ENCODE measurements at regions of chr6 and their contacts with region 1.

Region 1: DNA sequence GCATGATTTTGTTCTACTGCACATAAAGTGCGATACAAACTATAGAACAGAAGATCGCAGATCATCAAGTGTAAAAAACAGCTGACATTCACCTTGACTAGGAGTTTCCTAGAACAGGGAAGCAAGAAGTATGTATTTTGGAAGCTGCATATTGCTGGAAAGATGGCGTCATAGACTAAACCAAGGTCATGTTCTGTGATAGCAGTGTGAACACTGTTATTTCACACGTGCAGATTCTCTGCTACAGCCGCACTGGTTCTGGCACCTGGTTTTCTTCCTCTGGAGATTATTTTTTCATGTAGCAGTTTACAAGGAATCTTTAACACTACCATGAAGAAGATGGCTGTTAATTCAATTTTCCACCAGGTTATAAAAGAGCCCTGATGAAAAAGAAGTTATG is 681.2 kb downstream of the PRKN start:
- DNase-seq: no peak
- H3K4me3 ChIP-seq: no peak overlapping the region
- H3K27ac ChIP-seq: no peak overlapping the region
- H3K4me1 ChIP-seq: no peaks in the 10 kb centered on the region
- H3K27me3 ChIP-seq: no peaks in the 10 kb centered on the region
- CTCF ChIP-seq: no peak

Region 2: DNA sequence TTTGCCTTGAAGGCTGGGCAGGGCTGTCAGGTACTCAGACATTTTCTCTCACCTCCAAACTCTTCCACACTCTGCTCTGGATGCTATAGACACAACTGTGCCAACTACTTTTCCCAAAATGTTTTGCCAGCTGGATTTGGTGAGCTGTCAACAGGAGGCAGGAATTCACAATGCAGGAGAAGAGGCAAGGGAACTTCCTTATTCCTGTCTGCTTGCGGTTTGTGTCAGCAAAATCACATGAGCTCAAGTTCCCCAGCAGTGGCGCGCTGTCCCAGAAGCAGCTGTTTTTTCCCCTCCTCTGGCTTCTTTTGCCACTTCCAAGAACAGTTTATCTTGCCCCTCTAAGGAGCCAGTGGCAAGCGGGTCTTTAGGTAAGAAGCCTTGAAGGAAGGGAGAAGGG is 73.0 kb after region 1 on chr6:
- CTCF ChIA-PET with region 1: no interaction called
- dilution Hi-C with region 1: loop called (anchors 10 kb)
- in situ Hi-C with region 1: no loop called
- intact Hi-C with region 1: no loop called
- DNase-seq: no peak
- H3K4me3 ChIP-seq: no peak overlapping the region
- H3K27ac ChIP-seq: no peak overlapping the region
- H3K4me1 ChIP-seq: no peaks in the 10 kb centered on the region
- H3K27me3 ChIP-seq: no peaks in the 10 kb centered on the region
- CTCF ChIP-seq: no peak

Region 3: GRCh38 chr6:162385980-162386379 is 339.7 kb after region 1 on chr6:
- CTCF ChIA-PET with region 1: no interaction called
- dilution Hi-C with region 1: no loop called
- in situ Hi-C with region 1: no loop called
- intact Hi-C with region 1: no loop called
- DNase-seq: no peak
- H3K4me3 ChIP-seq: no peak overlapping the region
- H3K27ac ChIP-seq: no peak overlapping the region
- H3K4me1 ChIP-seq: no peaks in the 10 kb centered on the region
- H3K27me3 ChIP-seq: no peaks in the 10 kb centered on the region
- CTCF ChIP-seq: no peak

Measured in mammary epithelial cell (primary cell).